KBM-7 (cell line): ENCODE measurements at regions of chr2 and their contacts with region 1.

Region 1: DNA sequence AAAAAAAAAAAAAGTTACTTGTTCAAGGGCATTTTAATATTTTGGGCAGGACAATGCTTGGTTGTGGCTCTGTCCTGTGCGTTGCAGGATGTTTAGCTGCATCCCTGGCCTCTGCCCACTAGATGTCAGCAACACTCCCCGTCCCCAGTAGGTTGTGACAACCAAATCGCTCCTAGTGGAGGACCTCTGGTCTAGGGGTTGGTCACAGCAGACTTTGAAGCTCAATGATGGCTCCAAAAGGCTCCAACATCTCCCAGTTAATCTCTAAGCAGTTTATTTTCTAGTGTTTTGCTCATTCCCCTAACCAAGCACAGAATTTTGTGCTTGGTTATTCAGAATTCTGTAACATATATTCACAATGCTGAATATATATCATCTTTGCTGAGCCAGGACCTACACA is 67.0 kb downstream of the CHRNA1 start:
- DNase-seq: peak; percentile 71

Region 2: GRCh38 chr2:174465327-174465726 is 231.9 kb before region 1 on chr2:
- in situ Hi-C with region 1: loop called (anchors 25 kb)
- DNase-seq: no peak

Region 3: DNA sequence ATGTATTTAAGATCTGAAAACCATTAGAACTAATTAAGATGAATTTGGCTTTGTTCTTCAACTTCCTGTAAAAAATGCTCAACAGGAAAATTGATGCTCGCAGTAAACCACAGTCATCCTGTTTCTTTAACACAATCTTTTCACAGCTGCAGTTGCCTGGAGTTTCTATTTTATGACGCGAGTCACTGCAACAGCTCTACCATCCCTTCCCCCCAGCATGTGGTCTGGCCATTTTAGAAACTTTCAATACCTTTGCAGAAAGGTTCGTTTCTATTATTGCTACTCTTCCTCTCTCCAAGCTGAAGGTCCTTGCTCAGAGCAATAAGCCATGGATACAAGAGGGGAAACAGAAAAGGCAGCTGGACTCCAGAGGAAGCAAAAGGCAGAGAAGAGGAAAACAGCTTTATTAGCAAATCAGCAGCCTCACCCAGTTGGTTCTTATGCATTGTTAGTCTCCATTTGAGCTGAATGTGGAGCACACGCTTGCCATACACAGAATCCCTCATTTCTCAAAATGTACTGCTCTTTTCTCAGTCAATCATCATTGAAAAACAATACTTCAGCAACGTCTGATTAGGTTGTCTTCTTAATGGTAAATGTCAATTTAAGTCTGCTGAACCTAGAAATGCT is 103.6 kb before region 1 on chr2:
- in situ Hi-C with region 1: loop called (anchors 25 kb)
- DNase-seq: peak; percentile 95